ENCODE measurements at regions of chr1 and their contacts with region 1.

Region 1: DNA sequence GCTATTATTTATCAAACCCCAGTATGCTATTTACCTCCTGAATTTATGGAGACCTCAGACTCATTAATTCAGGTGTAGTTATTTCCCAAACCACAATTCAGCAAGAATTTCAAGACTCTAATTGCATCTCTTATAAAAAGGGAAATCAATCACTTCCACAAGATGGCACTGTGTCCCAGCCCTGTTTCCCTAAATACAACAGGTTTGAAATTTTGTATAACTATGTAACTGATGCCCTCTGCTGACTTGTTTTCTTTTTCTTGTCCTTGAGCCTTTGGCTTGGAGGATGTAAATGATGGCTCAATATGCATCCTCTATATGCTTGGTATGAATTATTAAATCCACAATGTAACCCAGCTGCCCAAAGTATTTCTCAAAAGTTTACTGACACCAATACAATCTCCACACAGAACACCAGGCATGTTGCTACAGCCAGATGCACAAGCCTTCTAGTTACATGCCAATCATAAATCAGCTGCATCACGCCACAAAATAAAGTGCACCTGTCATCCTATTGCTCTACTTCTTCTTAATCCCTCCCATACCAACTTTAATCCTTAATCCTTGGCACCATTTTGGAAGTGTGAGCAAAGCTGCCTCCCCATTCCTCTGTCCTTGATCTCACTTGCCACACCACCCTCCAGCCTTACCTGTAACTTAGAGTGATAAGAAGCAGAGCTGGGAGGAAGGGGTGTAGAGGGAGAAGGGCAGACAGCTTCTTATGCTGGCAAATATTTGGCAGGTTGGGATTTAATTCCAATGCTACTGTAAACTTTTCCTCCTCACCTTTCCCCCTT is 9.0 kb downstream of the C1orf105 start:
- DNase-seq: peak; percentile 82
- H3K4me3 Mint-ChIP-seq: no peak overlapping the region
- H3K27ac Mint-ChIP-seq: no peak overlapping the region
- H3K4me1 Mint-ChIP-seq: peaks cover 26% of the 10 kb centered on the region
- H3K27me3 Mint-ChIP-seq: no peaks in the 10 kb centered on the region

Region 2: GRCh38 chr1:172002725-172003345 is 426.7 kb before region 1 on chr1:
- intact Hi-C with region 1: loop called (anchors 1 kb)
- DNase-seq: peak; percentile 80
- H3K4me3 Mint-ChIP-seq: no peak overlapping the region
- H3K27ac Mint-ChIP-seq: no peak overlapping the region
- H3K4me1 Mint-ChIP-seq: peaks cover 3% of the 10 kb centered on the region
- H3K27me3 Mint-ChIP-seq: peaks cover under 1% of the 10 kb centered on the region

Region 3: GRCh38 chr1:172414331-172414730 is 15.2 kb before region 1 on chr1:
- intact Hi-C with region 1: no loop called
- DNase-seq: no peak
- H3K4me3 Mint-ChIP-seq: no peak overlapping the region
- H3K27ac Mint-ChIP-seq: no peak overlapping the region
- H3K4me1 Mint-ChIP-seq: peaks cover 2% of the 10 kb centered on the region
- H3K27me3 Mint-ChIP-seq: peaks cover 2% of the 10 kb centered on the region

Measured in activated CD4-positive, alpha-beta T cell treated with anti-CD3 and anti-CD28 coated beads, Interleukin-2, amount 10 ng/mL, durations not matched to agents 24 days and 14 days (primary cell).